Psoas muscle (tissue), 8 donors: ENCODE measurements at regions of chr6 and their contacts with region 1.

Region 1: GRCh38 chr6:41941280-41942066 is at the start of gene CCND3:
- DNase-seq: peak; percentile 96
- ATAC-seq: peak; percentile 97 to 98 (median 98)
- H3K4me3 ChIP-seq: peak within 1 kb of the TSS; percentile 97
- H3K27ac ChIP-seq: peak within 1 kb of the TSS; percentile 66
- H3K4me1 ChIP-seq: peaks cover 22% of the 10 kb centered on the region
- H3K27me3 ChIP-seq: no peaks in the 10 kb centered on the region
- CTCF ChIP-seq: no peak
- total RNA-seq, gene CCND3: 9.2 to 19.9 (median 16.7) TPM

Region 2: GRCh38 chr6:41964201-41964887 is 22.9 kb after region 1 on chr6:
- intact Hi-C with region 1: no loop called
- DNase-seq: no peak
- ATAC-seq: no peak
- H3K4me3 ChIP-seq: no peak overlapping the region
- H3K27ac ChIP-seq: no peak overlapping the region
- H3K4me1 ChIP-seq: no peaks in the 10 kb centered on the region
- H3K27me3 ChIP-seq: no peaks in the 10 kb centered on the region
- CTCF ChIP-seq: no peak

Region 3: GRCh38 chr6:42978839-42979522 is 1037.5 kb after region 1 on chr6 and contains the start of gene PEX6:
- intact Hi-C with region 1: loop called in 1 of 2 experiments (anchors 5 kb)
- DNase-seq: peak; percentile 93 to 94
- ATAC-seq: peak; percentile 87 to 92 (median 92)
- H3K4me3 ChIP-seq: peak within 1 kb of the TSS; percentile 98
- H3K27ac ChIP-seq: peak within 1 kb of the TSS; percentile 98
- H3K4me1 ChIP-seq: peaks cover 21% of the 10 kb centered on the region
- H3K27me3 ChIP-seq: no peaks in the 10 kb centered on the region
- CTCF ChIP-seq: no peak
- total RNA-seq, gene PEX6: 15.4 to 37.4 (median 25.8) TPM